ENCODE measurements at regions of chr3 and their contacts with region 1.

Region 1: DNA sequence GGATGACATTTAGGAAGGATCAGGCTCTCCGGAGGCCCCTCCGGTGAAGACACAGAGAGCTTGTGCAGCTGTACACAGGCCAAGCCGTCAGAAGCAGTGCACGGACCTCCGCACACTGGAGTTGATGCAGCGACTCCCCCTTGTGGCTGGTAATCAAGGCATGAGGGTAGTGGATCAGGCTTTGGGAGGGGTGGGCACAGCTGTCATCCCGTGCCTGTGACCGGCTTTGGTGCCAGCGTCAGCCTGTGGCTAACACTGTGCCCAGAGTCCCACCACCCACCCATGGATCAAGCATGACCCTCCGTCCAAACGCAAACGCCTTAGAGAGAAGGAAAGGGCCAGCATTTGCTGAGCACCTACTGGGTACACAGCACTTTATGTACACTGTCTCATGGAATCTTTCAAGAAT is 8.2 kb upstream of the GRIP2 start:
- DNase-seq: peak; percentile 39
- ATAC-seq: peak; percentile 96
- H3K4me3 ChIP-seq: no peak overlapping the region
- H3K27ac ChIP-seq: no peak overlapping the region
- H3K4me1 ChIP-seq: peaks cover 0 to 13% of the 10 kb centered on the region in 2 experiments; a peak in 2 of 4 replicates
- H3K27me3 ChIP-seq: no peaks in the 10 kb centered on the region
- CTCF ChIP-seq: peak; percentile 74 to 86 (median 78)
- POLR2A ChIP-seq: no peak
- RAD21 ChIP-seq: peak; percentile 85

Region 2: DNA sequence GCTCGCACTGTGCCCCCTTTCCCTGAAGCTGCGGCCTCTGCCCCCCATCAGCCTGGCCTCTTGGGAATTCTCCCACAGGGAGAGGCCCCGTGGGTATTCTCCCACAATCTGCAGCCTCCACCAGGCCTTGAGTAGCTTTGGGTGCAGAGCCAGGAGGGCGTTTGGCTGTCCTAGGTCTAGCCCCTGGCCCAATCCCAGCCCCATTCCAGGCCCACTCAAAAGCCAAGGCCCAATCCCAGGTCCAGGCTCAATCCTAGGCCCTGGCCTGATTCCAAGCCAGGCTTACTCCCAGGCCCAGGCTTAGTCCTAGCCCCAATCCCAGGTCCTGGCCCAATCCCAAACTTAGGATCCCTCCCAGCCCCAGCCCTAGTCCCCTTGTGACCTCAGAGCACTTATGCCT is 483.4 kb before region 1 on chr3:
- CTCF ChIA-PET with region 1: no interaction called
- POLR2A ChIA-PET with region 1: no interaction called
- RAD21 ChIA-PET with region 1: no interaction called
- intact Hi-C with region 1: no loop called
- DNase-seq: no peak
- ATAC-seq: no peak
- H3K4me3 ChIP-seq: no peak overlapping the region
- H3K27ac ChIP-seq: no peak overlapping the region
- H3K4me1 ChIP-seq: no peaks in the 10 kb centered on the region
- H3K27me3 ChIP-seq: no peaks in the 10 kb centered on the region
- CTCF ChIP-seq: no peak
- POLR2A ChIP-seq: no peak
- RAD21 ChIP-seq: no peak

Region 3: DNA sequence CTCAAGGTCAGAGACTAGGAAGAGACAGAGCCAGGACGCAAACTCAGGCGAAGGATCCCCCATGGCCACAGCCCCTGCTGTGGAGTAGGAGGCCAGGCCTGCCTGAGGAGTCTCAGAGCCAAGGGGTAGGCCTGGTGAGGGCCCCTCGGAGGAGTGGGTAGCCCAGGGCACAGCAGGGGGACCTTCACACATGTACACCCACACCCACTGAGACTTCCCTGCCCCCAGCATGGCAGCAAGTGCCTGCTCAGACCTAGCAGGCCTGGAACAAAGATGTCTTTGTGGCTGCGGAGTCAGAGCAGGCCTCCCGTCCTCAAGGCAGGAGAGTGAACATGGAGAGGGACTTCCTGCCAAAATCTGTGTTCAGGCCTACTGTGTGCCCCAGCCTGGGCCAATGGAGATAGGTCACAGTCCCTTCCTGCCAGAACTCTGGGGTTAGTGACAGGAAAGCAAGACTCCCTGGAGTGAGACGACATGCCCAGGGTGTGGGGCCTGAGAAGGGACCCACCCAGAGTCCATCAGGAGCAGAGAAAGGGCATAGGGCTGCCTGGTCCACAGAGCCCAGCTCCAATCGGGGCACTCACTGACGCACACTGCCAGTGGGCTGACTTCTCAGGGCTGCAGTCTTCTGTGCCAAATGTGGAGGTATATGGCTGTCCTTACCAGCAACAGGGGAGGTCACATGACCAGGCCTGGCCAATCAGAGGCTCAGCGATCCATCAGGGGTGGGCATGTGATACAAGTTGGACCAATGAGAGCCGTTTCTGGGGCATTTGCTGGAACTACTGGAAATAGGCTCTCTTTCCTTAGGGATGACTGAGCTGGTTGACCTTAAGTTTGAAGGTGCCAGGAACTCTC is 10.5 kb before region 1 on chr3:
- CTCF ChIA-PET with region 1: interaction called, 11 read pairs
- POLR2A ChIA-PET with region 1: interaction called, 3 read pairs
- RAD21 ChIA-PET with region 1: no interaction called
- intact Hi-C with region 1: no loop called
- DNase-seq: peak; percentile 47
- ATAC-seq: peak; percentile 83
- H3K4me3 ChIP-seq: no peak overlapping the region
- H3K27ac ChIP-seq: no peak overlapping the region
- H3K4me1 ChIP-seq: peaks cover 2 to 12% of the 10 kb centered on the region in 2 experiments; a peak in 3 of 4 replicates
- H3K27me3 ChIP-seq: no peaks in the 10 kb centered on the region
- CTCF ChIP-seq: no peak
- POLR2A ChIP-seq: no peak
- RAD21 ChIP-seq: no peak

Region 4: GRCh38 chr3:14803101-14803980 is 255.0 kb after region 1 on chr3:
- CTCF ChIA-PET with region 1: no interaction called
- POLR2A ChIA-PET with region 1: no interaction called
- RAD21 ChIA-PET with region 1: no interaction called
- intact Hi-C with region 1: no loop called
- DNase-seq: no peak
- ATAC-seq: peak; percentile 88
- H3K4me3 ChIP-seq: no peak overlapping the region
- H3K27ac ChIP-seq: no peak overlapping the region
- H3K4me1 ChIP-seq: peaks cover 8 to 29% of the 10 kb centered on the region in 2 experiments; a peak in 3 of 4 replicates
- H3K27me3 ChIP-seq: no peaks in the 10 kb centered on the region
- CTCF ChIP-seq: peak in 1 of 3 experiments; percentile 22; a peak in 1 of 6 replicates
- POLR2A ChIP-seq: no peak
- RAD21 ChIP-seq: no peak

Region 5: GRCh38 chr3:14863333-14864100 is 315.2 kb after region 1 on chr3:
- CTCF ChIA-PET with region 1: no interaction called
- POLR2A ChIA-PET with region 1: no interaction called
- RAD21 ChIA-PET with region 1: no interaction called
- intact Hi-C with region 1: no loop called
- DNase-seq: no peak
- ATAC-seq: peak; percentile 80
- H3K4me3 ChIP-seq: no peak overlapping the region
- H3K27ac ChIP-seq: no peak overlapping the region
- H3K4me1 ChIP-seq: no peaks in the 10 kb centered on the region
- H3K27me3 ChIP-seq: peaks cover 3% of the 10 kb centered on the region; the same call in 1 of the 2 replicates
- CTCF ChIP-seq: peak; percentile 28 to 61 (median 61); a peak in 5 of 6 replicates
- POLR2A ChIP-seq: no peak
- RAD21 ChIP-seq: peak; percentile 37; the same call in 1 of the 2 replicates

Region 6: DNA sequence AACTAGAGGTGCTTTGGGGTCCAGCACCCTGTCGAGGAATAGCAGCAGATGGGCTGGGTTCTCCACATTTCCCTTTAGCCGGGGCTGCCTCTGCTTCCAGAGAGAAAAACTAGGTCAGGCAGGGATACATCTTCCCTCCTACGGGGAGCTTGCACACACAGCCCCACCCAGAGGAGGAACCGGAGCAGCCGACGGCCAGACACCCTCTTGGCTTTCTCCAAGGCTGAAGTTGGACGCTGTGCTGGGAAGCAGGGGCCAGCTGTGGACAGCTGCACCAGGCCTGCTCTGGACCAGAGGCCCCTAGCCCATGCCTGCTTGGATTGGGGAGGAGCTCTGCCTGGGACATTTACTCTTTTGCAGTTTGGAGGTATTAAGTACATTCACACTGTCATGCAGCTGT is 354.4 kb after region 1 on chr3:
- CTCF ChIA-PET with region 1: no interaction called
- POLR2A ChIA-PET with region 1: no interaction called
- RAD21 ChIA-PET with region 1: no interaction called
- intact Hi-C with region 1: no loop called
- DNase-seq: no peak
- ATAC-seq: no peak
- H3K4me3 ChIP-seq: no peak overlapping the region
- H3K27ac ChIP-seq: no peak overlapping the region
- H3K4me1 ChIP-seq: no peaks in the 10 kb centered on the region
- H3K27me3 ChIP-seq: peaks cover 7% of the 10 kb centered on the region; the same call in 1 of the 2 replicates
- CTCF ChIP-seq: no peak
- POLR2A ChIP-seq: no peak
- RAD21 ChIP-seq: no peak

Measured in HCT116 (cell line).